Aorta (tissue), 5 donors: ENCODE measurements at regions of chr3 and their contacts with region 1.

Region 1: GRCh38 chr3:121545574-121546455 is at the start of gene POLQ:
- DNase-seq: peak; percentile 93 to 95
- ATAC-seq: peak; percentile 98
- H3K4me3 ChIP-seq: peak within 1 kb of the TSS; percentile 82 to 98
- H3K27ac ChIP-seq: peak within 1 kb of the TSS in 1 of 2 donors; percentile 67
- H3K4me1 ChIP-seq: no peaks in the 10 kb centered on the region
- H3K27me3 ChIP-seq: no peaks in the 10 kb centered on the region
- total RNA-seq, gene POLQ: 0.23 to 0.63 TPM

Region 2: GRCh38 chr3:122263974-122264588 is 718.3 kb after region 1 on chr3:
- intact Hi-C with region 1: loop called in 1 of 2 experiments (anchors 5 kb)
- DNase-seq: no peak
- ATAC-seq: no peak
- H3K4me3 ChIP-seq: no peak overlapping the region
- H3K27ac ChIP-seq: no peak overlapping the region
- H3K4me1 ChIP-seq: no peaks in the 10 kb centered on the region
- H3K27me3 ChIP-seq: no peaks in the 10 kb centered on the region

Region 3: GRCh38 chr3:122383771-122384697 is 838.2 kb after region 1 on chr3 and contains the start of gene FAM162A:
- intact Hi-C with region 1: loop called in 1 of 2 experiments (anchors 10 kb)
- DNase-seq: peak; percentile 96 to 98
- ATAC-seq: peak; percentile 99
- H3K4me3 ChIP-seq: peak within 1 kb of the TSS; percentile 60 to 91
- H3K27ac ChIP-seq: peak within 1 kb of the TSS; percentile 50 to 76
- H3K4me1 ChIP-seq: peaks cover 0 to 4% of the 10 kb centered on the region in 2 donors
- H3K27me3 ChIP-seq: no peaks in the 10 kb centered on the region
- total RNA-seq, gene FAM162A: 23.7 to 35.2 TPM